Left colon (tissue), 2 donors: ENCODE measurements at regions of chr5 and their contacts with region 1.

Region 1: DNA sequence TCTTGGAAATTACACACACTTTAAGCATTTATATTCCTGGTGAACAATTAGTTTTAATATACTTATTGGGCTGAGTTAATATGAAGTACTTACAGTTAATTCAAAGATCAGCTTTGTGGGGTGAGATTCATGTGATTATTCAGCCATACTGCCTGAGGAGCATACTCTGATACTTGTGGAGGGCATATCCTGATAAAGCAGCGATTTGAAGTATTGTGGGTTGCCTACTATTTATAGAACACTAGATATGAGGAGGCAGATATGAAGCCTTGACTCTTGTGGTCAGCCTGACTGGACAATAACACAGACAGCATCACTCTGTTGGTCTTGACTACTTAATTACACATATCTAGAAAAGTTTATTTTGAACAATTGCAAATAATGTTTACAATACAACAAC is 27.0 kb upstream of the AGGF1 start:
- DNase-seq: no peak
- ATAC-seq: no peak

Region 2: DNA sequence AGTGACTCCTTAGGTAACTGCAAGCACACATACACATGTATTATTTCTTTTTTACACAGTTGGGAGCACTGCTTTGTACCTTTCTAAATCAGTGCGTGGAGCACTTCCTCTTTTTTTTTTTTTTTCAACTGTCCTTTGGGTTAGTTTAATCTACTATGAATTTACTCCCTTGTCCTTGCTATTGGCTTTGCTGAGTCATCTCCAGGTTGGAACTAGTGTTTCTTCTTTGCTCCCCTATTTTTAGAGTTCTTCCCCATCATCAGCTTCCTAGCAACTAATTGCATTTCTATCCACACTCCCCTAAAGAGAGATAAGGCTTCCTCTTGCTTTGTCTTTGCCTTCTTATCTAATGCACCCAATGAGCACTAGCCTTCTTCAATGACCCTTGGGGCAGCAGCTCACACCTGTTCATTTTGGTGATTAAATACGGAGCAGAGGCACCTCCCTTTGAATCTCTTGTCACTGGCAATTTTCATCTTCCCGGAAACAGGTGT is 129.1 kb before region 1 on chr5:
- intact Hi-C with region 1: loop called in 1 of 2 experiments (anchors 10 kb)
- DNase-seq: no peak
- ATAC-seq: peak; percentile 36

Region 3: GRCh38 chr5:77143998-77144836 is 141.0 kb after region 1 on chr5:
- intact Hi-C with region 1: no loop called
- DNase-seq: peak; percentile 59 to 73
- ATAC-seq: peak; percentile 85